ENCODE measurements at regions of chr2 and their contacts with region 1.

Region 1: DNA sequence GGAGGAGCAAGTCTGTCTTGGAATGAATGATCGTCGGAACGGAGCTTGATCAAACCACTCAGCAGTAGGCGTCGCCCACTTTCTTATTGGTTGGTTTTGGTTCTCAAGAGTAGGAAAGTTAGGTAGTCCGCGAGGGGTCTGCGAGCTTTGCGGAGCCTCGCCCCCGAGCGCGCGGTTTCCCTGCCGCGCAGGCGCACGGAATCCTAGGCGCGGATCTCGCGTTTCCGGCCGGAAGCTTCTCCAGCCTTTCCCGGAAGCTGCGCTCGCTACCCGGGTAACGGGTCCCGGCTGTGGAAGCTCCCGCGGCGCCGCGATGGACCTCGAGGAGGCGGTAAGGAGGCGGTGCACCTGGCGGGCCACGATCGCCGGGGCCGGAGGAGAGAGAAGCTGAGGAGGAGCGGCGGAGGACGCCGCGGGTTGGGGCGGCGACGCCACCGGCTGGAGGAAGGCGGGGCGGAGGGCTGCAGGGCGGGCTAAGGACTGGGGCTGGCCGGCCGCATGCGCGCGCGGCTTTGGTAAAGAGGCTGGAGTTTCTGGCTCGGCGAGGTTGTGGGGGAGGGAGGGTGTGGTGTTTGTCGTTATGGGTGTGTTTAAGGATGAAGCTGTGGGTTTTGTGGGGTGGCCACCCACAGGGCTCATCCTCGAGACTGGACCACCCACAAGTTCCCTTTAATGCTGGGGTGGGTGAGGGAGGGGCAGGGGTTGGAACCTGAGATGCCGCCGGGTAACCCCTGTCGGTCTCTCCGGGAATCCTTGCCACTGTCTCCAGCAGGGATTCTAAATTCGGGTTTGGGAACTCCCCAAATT is at the start of gene TAF1B:
- DNase-seq: peak; percentile 89
- H3K4me3 Mint-ChIP-seq: peak within 1 kb of the TSS; percentile 93
- H3K27ac Mint-ChIP-seq: peak within 1 kb of the TSS; percentile 88
- H3K4me1 Mint-ChIP-seq: peaks cover 35% of the 10 kb centered on the region
- H3K27me3 Mint-ChIP-seq: no peaks in the 10 kb centered on the region
- total RNA-seq, gene TAF1B: 24.8 to 25.7 TPM

Region 2: GRCh38 chr2:8976442-8977259 is 866.8 kb before region 1 on chr2:
- CTCF ChIA-PET with region 1: no interaction called
- intact Hi-C with region 1: no loop called
- DNase-seq: no peak
- H3K4me3 Mint-ChIP-seq: no peak overlapping the region
- H3K27ac Mint-ChIP-seq: no peak overlapping the region
- H3K4me1 Mint-ChIP-seq: no peaks in the 10 kb centered on the region
- H3K27me3 Mint-ChIP-seq: no peaks in the 10 kb centered on the region

Region 3: DNA sequence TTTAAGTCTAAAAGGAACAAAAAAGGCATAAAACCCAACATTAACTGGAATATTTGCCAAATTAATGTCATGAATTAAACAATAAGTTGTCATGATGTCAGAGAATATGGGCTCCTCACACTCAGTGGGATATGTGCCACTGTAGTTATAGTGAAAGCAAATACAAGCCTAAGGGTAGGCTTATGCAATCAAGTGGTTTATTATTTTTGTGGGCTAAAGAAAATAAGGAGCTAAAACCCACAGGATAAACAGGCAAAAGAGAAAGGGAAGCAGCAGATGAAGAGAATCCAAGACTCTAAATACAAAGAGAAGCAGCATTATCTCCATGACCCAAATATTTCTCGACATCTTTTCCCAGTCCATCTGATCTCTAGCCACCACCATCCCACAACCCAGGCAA is 230.1 kb before region 1 on chr2:
- CTCF ChIA-PET with region 1: no interaction called
- intact Hi-C with region 1: loop called (anchors 1 kb)
- DNase-seq: no peak
- H3K4me3 Mint-ChIP-seq: no peak overlapping the region
- H3K27ac Mint-ChIP-seq: no peak overlapping the region
- H3K4me1 Mint-ChIP-seq: peaks cover 78% of the 10 kb centered on the region
- H3K27me3 Mint-ChIP-seq: no peaks in the 10 kb centered on the region

Region 4: GRCh38 chr2:9778012-9778411 is 65.4 kb before region 1 on chr2:
- CTCF ChIA-PET with region 1: interaction called, 3 read pairs
- intact Hi-C with region 1: loop called (anchors 1 kb)
- DNase-seq: peak; percentile 42
- H3K4me3 Mint-ChIP-seq: no peak overlapping the region
- H3K27ac Mint-ChIP-seq: no peak overlapping the region
- H3K4me1 Mint-ChIP-seq: peaks cover 40% of the 10 kb centered on the region
- H3K27me3 Mint-ChIP-seq: no peaks in the 10 kb centered on the region

Region 5: DNA sequence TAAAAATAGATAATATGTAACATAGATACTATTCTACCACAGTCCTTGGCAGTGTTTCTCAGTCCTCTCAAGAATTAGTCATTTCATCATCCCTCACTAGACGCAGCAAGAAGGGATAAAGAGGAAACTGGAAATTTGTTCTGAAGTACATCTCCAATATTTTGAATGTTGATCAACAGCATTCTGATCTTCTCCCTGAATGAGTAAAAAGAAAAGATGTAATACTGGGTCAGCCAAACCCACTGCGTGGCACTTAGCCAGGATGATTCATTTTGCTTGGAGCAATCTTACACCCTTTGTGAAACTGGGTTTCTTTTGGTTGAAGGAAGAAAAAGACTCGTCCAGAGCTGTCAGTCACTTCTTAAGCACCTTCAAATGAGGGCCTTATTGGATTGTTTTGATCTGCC is 53.9 kb after region 1 on chr2:
- CTCF ChIA-PET with region 1: interaction called, 3 read pairs
- intact Hi-C with region 1: loop called (anchors 1 kb)
- DNase-seq: peak; percentile 85
- H3K4me3 Mint-ChIP-seq: no peak overlapping the region
- H3K27ac Mint-ChIP-seq: no peak overlapping the region
- H3K4me1 Mint-ChIP-seq: peaks cover 27% of the 10 kb centered on the region
- H3K27me3 Mint-ChIP-seq: no peaks in the 10 kb centered on the region

Region 6: GRCh38 chr2:9975805-9976447 is 132.5 kb after region 1 on chr2:
- CTCF ChIA-PET with region 1: no interaction called
- intact Hi-C with region 1: loop called (anchors 1 kb)
- DNase-seq: peak; percentile 53
- H3K4me3 Mint-ChIP-seq: no peak overlapping the region
- H3K27ac Mint-ChIP-seq: no peak overlapping the region
- H3K4me1 Mint-ChIP-seq: peaks cover 40% of the 10 kb centered on the region
- H3K27me3 Mint-ChIP-seq: peaks cover 4% of the 10 kb centered on the region

Region 7: GRCh38 chr2:10448208-10448645 is 604.8 kb after region 1 on chr2 and contains the start of gene ODC1:
- CTCF ChIA-PET with region 1: no interaction called
- intact Hi-C with region 1: loop called (anchors 2 kb)
- DNase-seq: peak; percentile 89
- H3K4me3 Mint-ChIP-seq: peak within 1 kb of the TSS; percentile 85
- H3K27ac Mint-ChIP-seq: peak within 1 kb of the TSS; percentile 91
- H3K4me1 Mint-ChIP-seq: peaks cover 56% of the 10 kb centered on the region
- H3K27me3 Mint-ChIP-seq: no peaks in the 10 kb centered on the region
- total RNA-seq, gene ODC1: 174 to 177 TPM

Measured in activated naive CD4-positive, alpha-beta T cell treated with anti-CD3 and anti-CD28 coated beads for 36 hours (primary cell).